ENCODE measurements at regions of chr12 and their contacts with region 1.

Region 1: DNA sequence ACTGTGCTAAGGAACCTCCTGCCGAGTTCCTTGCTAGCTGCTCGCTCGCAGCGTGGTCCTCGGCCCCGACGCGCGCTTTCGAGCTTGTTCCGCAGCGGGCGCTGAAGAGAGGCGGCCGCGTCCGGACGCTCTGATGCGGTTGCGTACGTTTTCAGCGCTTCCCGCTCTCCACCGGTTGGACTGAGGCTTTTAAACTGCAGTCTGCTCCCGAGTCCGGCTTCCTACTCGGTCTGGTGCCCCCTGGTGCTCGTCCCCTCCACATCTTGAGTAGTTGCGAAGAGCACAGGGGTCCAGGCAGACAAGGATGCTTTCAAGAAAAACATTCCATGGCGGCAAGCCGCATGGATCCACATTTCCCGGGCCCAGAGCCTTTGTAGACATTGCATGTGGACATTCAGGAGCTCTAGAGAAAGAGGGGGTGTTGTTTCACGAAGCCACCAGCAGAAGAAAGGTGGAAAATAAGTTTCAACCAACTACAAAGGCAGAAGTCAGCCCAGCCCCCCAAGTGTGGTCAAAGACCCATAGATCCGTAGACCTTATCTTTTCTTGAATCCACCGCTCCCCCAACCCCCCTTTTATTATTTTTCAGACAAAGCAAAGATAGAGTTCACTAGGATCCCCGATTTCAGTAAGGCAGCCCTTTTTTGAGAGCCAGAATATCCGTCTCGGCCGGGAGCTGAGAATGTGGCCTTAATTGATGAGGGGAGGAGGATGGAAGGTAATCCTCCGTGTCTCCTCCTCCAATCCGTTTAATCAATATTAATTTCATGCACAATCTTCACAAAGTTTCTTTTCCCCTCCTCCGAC is 984 bp upstream of the WNK1 start:
- DNase-seq: peak; percentile 96
- H3K4me3 Mint-ChIP-seq: no peak overlapping the region
- H3K27ac Mint-ChIP-seq: no peak overlapping the region
- H3K4me1 Mint-ChIP-seq: peaks cover 21% of the 10 kb centered on the region
- H3K27me3 Mint-ChIP-seq: no peaks in the 10 kb centered on the region

Region 2: DNA sequence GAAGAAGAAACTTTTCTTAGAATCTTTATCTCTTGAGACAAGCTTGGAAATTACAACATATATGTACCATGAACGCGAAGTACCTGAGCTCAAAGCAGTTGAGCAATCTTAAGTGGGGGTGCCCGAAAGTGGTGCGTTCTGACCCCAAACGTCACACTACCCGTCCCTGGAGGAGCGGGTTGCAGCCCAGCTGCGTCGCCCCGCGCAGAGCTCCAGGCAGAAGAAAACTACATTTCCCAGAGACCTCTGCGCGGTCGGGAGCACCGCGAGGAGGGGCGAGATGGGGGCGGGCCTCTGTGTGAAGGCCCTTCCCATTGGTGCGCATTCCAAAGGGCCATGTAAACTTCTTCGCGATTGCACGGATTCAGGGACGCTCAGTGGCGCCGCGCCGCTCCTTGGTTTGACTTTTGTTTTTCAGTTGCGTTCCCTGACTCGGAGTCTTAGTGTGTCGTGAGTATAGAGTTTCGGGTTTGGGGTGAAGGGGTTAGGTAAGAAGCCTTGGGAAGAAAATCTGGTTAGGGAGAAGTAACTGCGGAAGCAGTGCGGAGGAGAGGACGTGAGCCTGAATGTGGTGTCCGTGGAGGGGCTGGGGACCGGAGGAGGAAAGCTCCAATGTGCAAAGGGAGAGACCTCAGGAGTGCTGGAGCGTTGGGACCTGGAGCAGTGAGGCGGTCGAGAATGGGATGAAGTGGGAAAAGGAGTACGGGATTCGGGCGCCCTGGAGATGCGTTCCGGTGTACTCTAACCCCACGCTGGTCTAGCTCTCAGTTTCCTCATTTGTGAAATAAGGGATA is 350.0 kb before region 1 on chr12 and contains the start of gene CCDC77:
- intact Hi-C with region 1: loop called (anchors 5 kb)
- DNase-seq: peak; percentile 99
- H3K4me3 Mint-ChIP-seq: no peak within 1 kb of the TSS
- H3K27ac Mint-ChIP-seq: no peak within 1 kb of the TSS
- H3K4me1 Mint-ChIP-seq: no peaks in the 10 kb centered on the region
- H3K27me3 Mint-ChIP-seq: no peaks in the 10 kb centered on the region
- total RNA-seq, gene CCDC77: 12.2 and 13.0 TPM in 2 replicates

Region 3: GRCh38 chr12:630656-631632 is 120.5 kb before region 1 on chr12:
- intact Hi-C with region 1: loop called (anchors 2 kb)
- DNase-seq: peak; percentile 96
- H3K4me3 Mint-ChIP-seq: peak overlapping the region; percentile 93
- H3K27ac Mint-ChIP-seq: peak overlapping the region; percentile 99
- H3K4me1 Mint-ChIP-seq: peaks cover 42% of the 10 kb centered on the region
- H3K27me3 Mint-ChIP-seq: no peaks in the 10 kb centered on the region

Region 4: DNA sequence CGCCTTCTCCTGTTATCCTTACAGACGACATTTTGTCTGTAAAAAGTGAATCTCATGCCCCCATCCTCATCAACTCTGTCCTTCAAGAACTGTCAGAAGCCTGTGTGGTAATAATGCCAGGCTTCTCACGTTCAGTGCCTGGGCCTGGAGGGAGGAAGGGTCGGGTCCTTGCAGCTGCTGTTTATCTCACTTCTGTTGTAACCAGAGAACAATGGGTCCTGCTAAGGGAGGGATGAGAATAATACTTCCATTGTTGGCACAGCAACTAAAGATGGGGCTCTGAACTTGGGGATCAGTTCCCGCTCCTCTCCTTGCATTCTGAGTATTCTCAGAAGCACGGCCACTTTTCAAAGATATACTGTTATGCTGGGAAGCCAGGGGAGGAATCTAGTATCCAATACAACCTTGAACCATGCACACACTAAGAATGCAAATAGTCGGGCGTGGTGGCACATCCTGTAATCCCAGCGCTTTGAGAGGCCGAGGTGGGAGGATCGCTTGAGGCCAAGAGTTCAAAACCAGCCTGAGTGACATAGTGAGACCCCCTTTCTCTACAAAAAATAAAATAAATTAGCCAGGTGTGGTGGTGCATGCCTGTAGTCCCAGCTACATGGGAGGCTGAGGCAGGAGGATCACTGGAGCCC is 49.4 kb before region 1 on chr12:
- intact Hi-C with region 1: no loop called
- DNase-seq: no peak
- H3K4me3 Mint-ChIP-seq: no peak overlapping the region
- H3K27ac Mint-ChIP-seq: no peak overlapping the region
- H3K4me1 Mint-ChIP-seq: peaks cover 14% of the 10 kb centered on the region
- H3K27me3 Mint-ChIP-seq: no peaks in the 10 kb centered on the region

Region 5: GRCh38 chr12:712172-712863 is 39.1 kb before region 1 on chr12:
- intact Hi-C with region 1: loop called (anchors 1 kb)
- DNase-seq: no peak
- H3K4me3 Mint-ChIP-seq: peak overlapping the region; percentile 25
- H3K27ac Mint-ChIP-seq: peak overlapping the region; percentile 81
- H3K4me1 Mint-ChIP-seq: peaks cover 26% of the 10 kb centered on the region
- H3K27me3 Mint-ChIP-seq: no peaks in the 10 kb centered on the region

Region 6: DNA sequence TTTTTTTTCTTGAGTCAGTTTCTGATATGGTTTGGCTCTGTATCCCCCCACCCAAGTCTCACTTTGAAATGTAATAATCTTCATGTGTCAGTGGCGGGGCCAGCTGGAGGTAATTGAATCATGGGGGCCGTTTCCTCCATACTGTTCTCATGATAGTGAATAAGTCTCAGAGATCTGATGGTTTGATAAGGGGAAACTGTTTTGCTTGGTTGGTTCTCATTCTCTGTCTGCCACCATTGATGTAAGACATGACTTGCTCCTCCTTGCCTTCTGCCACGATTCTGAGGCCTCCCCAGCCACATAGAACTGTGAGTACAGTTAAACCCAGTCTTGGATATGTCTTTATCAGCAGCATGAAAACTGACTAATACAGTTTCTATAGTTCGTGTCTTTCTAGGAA is 43.9 kb after region 1 on chr12:
- intact Hi-C with region 1: loop called (anchors 1 kb)
- DNase-seq: peak; percentile 78
- H3K4me3 Mint-ChIP-seq: peak overlapping the region; percentile 68
- H3K27ac Mint-ChIP-seq: peak overlapping the region; percentile 94
- H3K4me1 Mint-ChIP-seq: peaks cover 58% of the 10 kb centered on the region
- H3K27me3 Mint-ChIP-seq: no peaks in the 10 kb centered on the region

Region 7: GRCh38 chr12:1220127-1221092 is 469.0 kb after region 1 on chr12:
- intact Hi-C with region 1: no loop called
- DNase-seq: no peak
- H3K4me3 Mint-ChIP-seq: no peak overlapping the region
- H3K27ac Mint-ChIP-seq: no peak overlapping the region
- H3K4me1 Mint-ChIP-seq: no peaks in the 10 kb centered on the region
- H3K27me3 Mint-ChIP-seq: no peaks in the 10 kb centered on the region

Measured in activated CD4-positive, alpha-beta T cell treated with anti-CD3 and anti-CD28 coated beads, Interleukin-2, amount 10 ng/mL, durations not matched to agents 24 days and 14 days (primary cell).